ENCODE measurements at regions of chr21 and their contacts with region 1.

Region 1: GRCh38 chr21:26967062-26967913 is at the start of gene ADAMTS5:
- DNase-seq: no peak
- ATAC-seq: no peak
- H3K4me3 ChIP-seq: no peak within 1 kb of the TSS
- H3K4me3 Mint-ChIP-seq: peak within 1 kb of the TSS in 2 of 10 donors; percentile 25 to 59
- H3K27ac ChIP-seq: no peak within 1 kb of the TSS
- H3K27ac Mint-ChIP-seq: peak within 1 kb of the TSS in 1 of 9 donors; percentile 48
- H3K4me1 ChIP-seq: no peaks in the 10 kb centered on the region
- H3K4me1 Mint-ChIP-seq: peaks cover 0 to 8% (median 0%) of the 10 kb centered on the region in 7 donors
- H3K27me3 ChIP-seq: no peaks in the 10 kb centered on the region
- H3K27me3 Mint-ChIP-seq: peaks cover 49 to 65% (median 54%) of the 10 kb centered on the region in 5 donors
- total RNA-seq, gene ADAMTS5: 0.03 to 0.12 TPM in 2 of 5 experiments, not detected in the others

Region 2: DNA sequence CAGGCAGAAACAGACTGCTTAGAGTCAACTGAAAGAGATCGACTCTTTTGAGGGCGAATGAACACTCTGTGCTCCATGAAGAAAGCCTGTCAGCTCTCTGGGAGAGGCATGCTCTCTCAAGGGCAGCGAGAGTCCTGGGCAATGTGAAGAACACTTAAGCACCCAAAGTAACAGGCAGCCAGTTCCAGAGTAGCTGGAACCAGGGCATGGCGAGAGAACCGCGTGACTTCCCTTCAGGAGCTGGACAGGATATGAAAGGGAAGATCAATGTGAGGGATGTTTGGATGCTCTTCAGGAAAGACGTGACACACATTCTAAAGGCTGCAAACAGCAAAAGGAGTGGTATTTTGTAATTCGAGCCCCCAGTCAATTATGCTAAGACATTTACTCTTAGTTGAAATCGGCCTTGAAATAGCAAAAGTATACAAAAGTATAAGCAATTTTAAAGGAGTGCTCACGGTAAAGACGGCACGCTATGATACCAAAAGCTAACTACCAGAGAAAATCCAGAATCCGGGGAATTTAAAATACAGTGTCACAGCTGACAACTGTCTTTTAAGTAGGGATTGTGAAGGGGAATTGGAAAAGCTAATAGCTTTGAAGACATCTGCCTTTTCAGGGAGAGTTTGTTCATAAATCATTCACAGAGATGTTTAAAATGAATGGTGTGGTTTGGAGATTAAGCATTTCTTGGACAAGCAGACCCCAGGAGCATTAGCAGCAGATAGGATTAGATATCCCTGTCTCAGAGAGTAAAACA is 21.2 kb before region 1 on chr21:
- CTCF ChIA-PET with region 1: no interaction called
- POLR2A ChIA-PET with region 1: no interaction called
- intact Hi-C with region 1: no loop called
- DNase-seq: no peak
- ATAC-seq: no peak
- H3K4me3 ChIP-seq: no peak overlapping the region
- H3K4me3 Mint-ChIP-seq: no peak overlapping the region
- H3K27ac ChIP-seq: no peak overlapping the region
- H3K27ac Mint-ChIP-seq: no peak overlapping the region
- H3K4me1 ChIP-seq: no peaks in the 10 kb centered on the region
- H3K4me1 Mint-ChIP-seq: no peaks in the 10 kb centered on the region
- H3K27me3 ChIP-seq: no peaks in the 10 kb centered on the region
- H3K27me3 Mint-ChIP-seq: peaks cover 0 to 15% (median 4%) of the 10 kb centered on the region in 5 donors

Region 3: DNA sequence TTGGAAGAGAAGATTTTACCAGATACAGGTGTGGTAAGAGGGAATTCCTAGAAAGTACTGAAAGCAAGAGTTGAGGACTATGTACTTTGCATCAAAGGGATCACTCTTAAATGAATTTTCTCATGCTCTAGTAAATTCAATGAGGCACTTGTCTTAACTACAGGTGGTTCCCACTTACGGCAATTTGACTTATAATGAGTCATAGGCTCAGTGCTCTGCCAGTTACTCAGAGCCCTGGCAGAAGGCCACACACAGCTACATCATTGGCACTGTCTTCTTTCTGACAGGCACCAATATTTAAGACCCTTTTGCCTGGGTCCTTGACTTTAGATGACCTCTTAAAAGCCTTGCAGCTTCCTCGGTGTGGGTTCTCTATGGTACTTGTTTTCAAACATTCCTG is 15.5 kb after region 1 on chr21:
- CTCF ChIA-PET with region 1: no interaction called
- POLR2A ChIA-PET with region 1: no interaction called
- intact Hi-C with region 1: no loop called
- DNase-seq: no peak
- ATAC-seq: no peak
- H3K4me3 ChIP-seq: no peak overlapping the region
- H3K4me3 Mint-ChIP-seq: no peak overlapping the region
- H3K27ac ChIP-seq: no peak overlapping the region
- H3K27ac Mint-ChIP-seq: no peak overlapping the region
- H3K4me1 ChIP-seq: no peaks in the 10 kb centered on the region
- H3K4me1 Mint-ChIP-seq: no peaks in the 10 kb centered on the region
- H3K27me3 ChIP-seq: no peaks in the 10 kb centered on the region
- H3K27me3 Mint-ChIP-seq: peaks cover 0 to 11% (median 0%) of the 10 kb centered on the region in 5 donors

Region 4: DNA sequence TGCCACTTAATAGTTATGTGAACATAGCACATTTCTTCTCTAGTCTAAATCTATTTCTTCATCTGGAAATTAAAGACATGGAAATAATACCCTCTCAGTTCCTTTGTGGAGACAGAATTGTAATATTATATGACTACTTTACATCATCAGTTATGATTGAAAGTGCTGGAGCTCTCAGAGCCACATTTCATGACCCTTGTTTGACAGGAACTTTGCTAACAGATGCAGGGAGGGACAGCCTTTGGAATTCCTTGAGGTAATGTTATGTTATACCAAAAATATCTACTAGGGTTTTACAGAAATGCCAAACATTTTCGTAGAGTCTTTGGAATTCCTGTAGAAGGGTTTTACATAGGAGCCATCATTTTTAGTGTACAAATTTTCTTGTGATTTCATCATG is 57.0 kb after region 1 on chr21:
- CTCF ChIA-PET with region 1: no interaction called
- POLR2A ChIA-PET with region 1: no interaction called
- intact Hi-C with region 1: loop called in 1 of 2 experiments (anchors 10 kb)
- DNase-seq: no peak
- ATAC-seq: no peak
- H3K4me3 ChIP-seq: no peak overlapping the region
- H3K4me3 Mint-ChIP-seq: no peak overlapping the region
- H3K27ac ChIP-seq: no peak overlapping the region
- H3K27ac Mint-ChIP-seq: no peak overlapping the region
- H3K4me1 ChIP-seq: no peaks in the 10 kb centered on the region
- H3K4me1 Mint-ChIP-seq: no peaks in the 10 kb centered on the region
- H3K27me3 ChIP-seq: no peaks in the 10 kb centered on the region
- H3K27me3 Mint-ChIP-seq: peaks cover 0 to 7% (median 6%) of the 10 kb centered on the region in 5 donors